ENCODE measurements at regions of chr7 and their contacts with region 1.

Region 1: GRCh38 chr7:100586266-100587025 is at the start of gene FBXO24:
- DNase-seq: peak; percentile 96 to 100 (median 100)
- ATAC-seq: peak; percentile 83 to 85
- H3K4me3 Mint-ChIP-seq: peak within 1 kb of the TSS; percentile 93 to 100 (median 97)
- H3K27ac Mint-ChIP-seq: peak within 1 kb of the TSS in 7 of 10 donors; percentile 81 to 98 (median 97)
- H3K4me1 Mint-ChIP-seq: peaks cover 21 to 41% (median 31%) of the 10 kb centered on the region in 4 donors
- H3K27me3 Mint-ChIP-seq: peaks cover 0 to 10% (median 3%) of the 10 kb centered on the region in 5 donors
- polyA plus RNA-seq, gene FBXO24: 0.60 to 0.95 (median 0.61) TPM

Region 2: DNA sequence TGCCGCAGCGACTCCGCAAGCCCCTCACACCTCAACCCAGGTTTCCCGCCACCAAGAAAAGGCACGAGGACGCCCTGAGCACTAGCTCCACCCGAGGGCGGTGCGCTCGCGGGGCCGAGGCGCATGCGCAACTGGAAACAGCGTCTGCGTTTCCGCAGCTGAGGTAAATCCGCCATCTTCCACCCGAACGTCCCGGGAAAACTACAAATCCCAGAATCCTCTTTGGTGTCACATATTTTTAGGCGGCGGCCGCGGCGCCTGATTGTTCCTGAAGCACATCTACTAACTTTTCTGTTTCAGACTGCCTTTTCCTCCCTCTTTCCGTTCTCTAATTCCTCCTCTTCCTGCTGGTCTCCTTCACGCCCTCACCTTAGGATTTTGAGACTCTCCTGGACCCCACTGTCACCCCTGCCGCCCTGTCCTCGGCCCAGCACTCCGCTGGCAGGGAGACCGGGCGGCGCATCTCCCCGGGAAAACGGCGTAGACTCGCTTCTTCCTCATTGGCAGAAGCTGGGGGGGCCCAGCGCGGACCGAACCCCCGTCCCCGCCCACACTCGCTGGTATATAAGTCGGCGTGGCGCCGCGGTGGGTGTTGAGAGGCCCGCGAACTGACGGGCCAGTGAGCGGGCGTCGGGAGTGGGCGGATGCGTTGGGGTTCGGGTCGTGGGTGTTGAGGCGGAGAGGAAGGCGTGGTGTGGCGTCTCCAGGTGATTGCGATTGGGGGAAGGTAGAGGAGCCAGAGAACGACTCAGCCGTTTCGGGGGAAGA is 158.1 kb before region 1 on chr7 and contains the start of gene ZCWPW1:
- POLR2A ChIA-PET with region 1: interaction called, 72 read pairs
- DNase-seq: peak; percentile 93 to 99 (median 96)
- ATAC-seq: peak; percentile 61 to 64
- H3K4me3 Mint-ChIP-seq: peak within 1 kb of the TSS; percentile 89 to 100 (median 99)
- H3K27ac Mint-ChIP-seq: peak within 1 kb of the TSS; percentile 99 to 100 (median 100)
- H3K4me1 Mint-ChIP-seq: peaks cover 26 to 51% (median 46%) of the 10 kb centered on the region in 4 donors
- H3K27me3 Mint-ChIP-seq: peaks cover 0 to 11% (median 0%) of the 10 kb centered on the region in 5 donors
- polyA plus RNA-seq, gene ZCWPW1: 3.1 to 9.3 (median 5.5) TPM

Region 3: GRCh38 chr7:100538654-100539435 is 47.6 kb before region 1 on chr7 and contains the start of gene AGFG2:
- POLR2A ChIA-PET with region 1: interaction called, 14 read pairs
- DNase-seq: peak; percentile 98 to 100 (median 100)
- ATAC-seq: peak; percentile 94
- H3K4me3 Mint-ChIP-seq: peak within 1 kb of the TSS; percentile 92 to 100 (median 98)
- H3K27ac Mint-ChIP-seq: peak within 1 kb of the TSS; percentile 78 to 99 (median 90)
- H3K4me1 Mint-ChIP-seq: peaks cover 17 to 52% (median 49%) of the 10 kb centered on the region in 4 donors
- H3K27me3 Mint-ChIP-seq: peaks cover 0 to 2% (median 0%) of the 10 kb centered on the region in 5 donors
- polyA plus RNA-seq, gene AGFG2: 5.8 to 13.6 (median 11.5) TPM

Region 4: GRCh38 chr7:100575203-100575631 is 11.2 kb before region 1 on chr7:
- POLR2A ChIA-PET with region 1: interaction called, 333 read pairs
- DNase-seq: no peak
- ATAC-seq: no peak
- H3K4me3 Mint-ChIP-seq: no peak overlapping the region
- H3K27ac Mint-ChIP-seq: peak overlapping the region in 2 of 10 donors; percentile 11 to 67
- H3K4me1 Mint-ChIP-seq: peaks cover 5 to 36% (median 27%) of the 10 kb centered on the region in 4 donors
- H3K27me3 Mint-ChIP-seq: no peaks in the 10 kb centered on the region

Region 5: DNA sequence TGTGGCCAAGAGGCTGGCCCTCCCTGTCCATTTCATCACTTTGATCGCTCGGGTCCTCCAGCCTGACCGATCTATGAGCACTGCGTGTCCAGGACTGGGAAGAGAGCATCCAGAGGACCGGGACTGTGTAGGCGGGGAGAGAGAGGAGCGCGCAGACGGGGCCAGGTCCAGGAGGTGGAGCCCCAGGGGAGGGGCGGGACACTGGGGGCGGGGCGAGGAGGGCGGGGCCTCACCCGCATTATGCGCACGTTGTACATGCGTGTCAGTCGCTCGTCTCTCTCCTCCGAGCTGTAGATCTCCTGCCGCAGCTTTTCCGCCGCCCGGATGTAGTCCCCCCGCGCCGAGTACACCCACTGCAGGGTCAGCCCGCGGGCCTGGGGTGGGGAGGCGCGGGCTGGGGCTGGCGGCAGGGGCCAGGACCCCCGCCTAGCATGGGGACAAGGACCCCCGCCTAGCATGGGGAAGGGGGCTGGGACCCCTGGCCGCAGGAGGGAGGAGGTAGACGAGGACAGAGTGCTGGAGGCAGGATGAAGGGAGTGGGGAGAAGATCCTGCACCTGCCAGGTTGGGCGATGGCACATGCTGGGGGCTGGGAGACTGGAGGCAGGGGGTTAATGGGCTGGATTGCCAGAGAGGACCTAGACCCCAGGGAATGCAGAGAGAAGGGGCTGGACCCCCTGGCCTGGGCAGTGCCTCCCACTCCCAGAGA is 40.2 kb after region 1 on chr7:
- POLR2A ChIA-PET with region 1: interaction called, 32 read pairs
- DNase-seq: peak; percentile 77 to 93 (median 84)
- ATAC-seq: peak; percentile 96 to 97
- H3K4me3 Mint-ChIP-seq: peak overlapping the region; percentile 68 to 81 (median 78)
- H3K27ac Mint-ChIP-seq: peak overlapping the region; percentile 28 to 90 (median 86)
- H3K4me1 Mint-ChIP-seq: peaks cover 16 to 49% (median 39%) of the 10 kb centered on the region in 4 donors
- H3K27me3 Mint-ChIP-seq: no peaks in the 10 kb centered on the region

Region 6: DNA sequence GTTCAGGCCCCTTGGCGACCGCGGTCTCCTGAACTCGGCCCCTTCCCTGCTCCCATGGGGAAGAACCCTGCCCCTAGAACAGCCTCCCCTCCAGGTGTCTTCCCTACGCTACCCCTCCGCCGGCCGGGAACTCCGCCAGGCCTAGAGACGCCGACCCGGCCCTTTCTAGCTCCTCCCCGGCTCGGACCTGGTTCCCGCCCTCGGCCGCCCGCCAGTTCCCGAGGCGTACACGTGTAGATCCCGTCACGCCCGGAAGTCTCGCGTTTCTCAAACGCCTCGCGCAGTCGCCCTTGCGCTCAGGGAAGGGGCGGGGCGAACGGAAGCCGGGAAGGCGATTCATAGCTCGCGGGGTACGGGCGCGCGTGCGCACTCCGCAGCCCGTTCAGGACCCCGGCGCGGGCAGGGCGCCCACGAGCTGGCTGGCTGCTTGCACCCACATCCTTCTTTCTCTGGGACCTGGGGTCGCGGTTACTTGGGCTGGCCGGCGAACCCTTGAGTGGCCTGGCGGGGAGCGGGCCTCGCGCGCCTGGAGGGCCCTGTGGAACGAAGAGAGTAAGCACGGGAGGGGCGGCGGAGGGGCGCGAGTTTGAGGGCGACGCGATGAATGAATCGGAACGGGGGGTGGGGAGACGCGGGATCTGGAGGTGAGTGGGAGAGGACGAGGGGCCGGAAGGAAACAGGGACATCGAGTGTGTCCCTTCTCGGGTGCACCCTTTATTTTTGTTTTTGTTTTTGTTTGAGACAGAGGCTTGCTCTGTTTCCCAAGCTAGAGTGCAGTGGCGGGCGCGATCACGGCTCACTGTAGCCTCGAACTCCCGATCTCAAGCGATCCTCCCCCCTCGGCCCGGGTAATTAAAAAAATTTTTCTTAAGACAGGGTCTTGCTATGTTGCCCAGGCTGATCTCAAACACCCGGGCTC is 119.6 kb after region 1 on chr7 and contains the start of gene POP7:
- POLR2A ChIA-PET with region 1: interaction called, 43 read pairs
- DNase-seq: peak; percentile 96 to 99 (median 98)
- ATAC-seq: peak; percentile 93 to 95
- H3K4me3 Mint-ChIP-seq: peak within 1 kb of the TSS; percentile 91 to 99 (median 96)
- H3K27ac Mint-ChIP-seq: peak within 1 kb of the TSS; percentile 88 to 96 (median 93)
- H3K4me1 Mint-ChIP-seq: peaks cover 8 to 25% (median 20%) of the 10 kb centered on the region in 4 donors
- H3K27me3 Mint-ChIP-seq: peaks cover 0 to 2% (median 0%) of the 10 kb centered on the region in 5 donors
- polyA plus RNA-seq, gene POP7: 32.6 to 41.7 (median 33.0) TPM

Measured in naive thymus-derived CD8-positive, alpha-beta T cell (primary cell).